Activated CD8-positive, alpha-beta T cell treated with anti-CD3 and anti-CD28 coated beads for 36 hours (primary cell): ENCODE measurements at regions of chr1 and their contacts with region 1.

Region 1: GRCh38 chr1:1387098-1388077 is 11.7 kb downstream of the CCNL2 start:
- DNase-seq: no peak
- ATAC-seq: no peak
- H3K4me3 Mint-ChIP-seq: no peak overlapping the region
- H3K27ac Mint-ChIP-seq: no peak overlapping the region
- H3K4me1 Mint-ChIP-seq: peaks cover under 1% of the 10 kb centered on the region
- H3K27me3 Mint-ChIP-seq: no peaks in the 10 kb centered on the region
- CTCF ChIP-seq: no peak

Region 2: GRCh38 chr1:1231400-1232223 is 155.8 kb before region 1 on chr1 and contains the start of gene SDF4:
- CTCF ChIA-PET with region 1: no interaction called
- POLR2A ChIA-PET with region 1: no interaction called
- intact Hi-C with region 1: no loop called
- DNase-seq: peak; percentile 97
- ATAC-seq: peak; percentile 98
- H3K4me3 Mint-ChIP-seq: peak within 1 kb of the TSS; percentile 95
- H3K27ac Mint-ChIP-seq: peak within 1 kb of the TSS; percentile 93
- H3K4me1 Mint-ChIP-seq: peaks cover 32% of the 10 kb centered on the region
- H3K27me3 Mint-ChIP-seq: no peaks in the 10 kb centered on the region
- CTCF ChIP-seq: no peak
- total RNA-seq, gene SDF4: 81.5 to 87.5 TPM

Region 3: DNA sequence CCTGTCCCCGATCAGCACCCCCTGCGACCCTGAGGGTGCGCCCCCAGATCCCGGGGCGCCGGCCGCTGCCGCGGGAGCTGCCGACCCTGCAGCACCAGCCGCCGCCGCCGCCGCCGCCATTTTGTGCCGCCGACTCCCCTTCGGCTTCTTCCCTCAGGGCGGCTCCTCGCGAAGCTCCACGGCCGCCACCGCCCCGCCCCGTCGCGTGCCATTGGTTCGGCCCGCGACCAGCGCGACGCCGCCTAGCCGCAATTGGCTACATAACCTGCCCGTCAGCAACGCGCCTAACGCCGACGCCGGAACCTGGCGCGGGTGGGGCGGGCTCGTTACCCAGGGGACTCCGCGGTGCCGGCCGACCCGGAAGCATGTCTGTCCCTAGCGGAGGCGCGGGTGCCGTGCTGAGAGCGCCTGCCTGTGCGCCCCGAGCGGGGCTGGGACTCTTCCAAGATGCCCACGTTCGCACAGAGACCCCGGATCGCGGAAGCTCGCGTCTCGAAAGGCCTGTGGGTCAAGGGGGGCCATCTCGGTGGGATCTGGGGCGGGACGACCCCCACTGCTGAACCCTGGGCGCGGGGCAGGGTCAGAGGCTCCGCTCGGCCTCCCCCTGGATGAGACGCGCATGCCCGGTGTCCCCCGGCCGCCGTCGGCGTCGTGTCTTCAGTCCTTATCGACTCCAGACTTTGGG is 11.9 kb after region 1 on chr1 and contains the start of gene CCNL2:
- CTCF ChIA-PET with region 1: interaction called, 6 read pairs
- POLR2A ChIA-PET with region 1: interaction called, 48 read pairs
- intact Hi-C with region 1: no loop called
- DNase-seq: peak; percentile 99
- ATAC-seq: peak; percentile 97
- H3K4me3 Mint-ChIP-seq: peak within 1 kb of the TSS; percentile 93
- H3K27ac Mint-ChIP-seq: peak within 1 kb of the TSS; percentile 90
- H3K4me1 Mint-ChIP-seq: peaks cover 48% of the 10 kb centered on the region
- H3K27me3 Mint-ChIP-seq: no peaks in the 10 kb centered on the region
- CTCF ChIP-seq: peak; percentile 54
- total RNA-seq, gene CCNL2: 86.3 to 92.4 TPM